HepG2 (cell line): ENCODE measurements at regions of chr9 and their contacts with region 1.

Region 1: DNA sequence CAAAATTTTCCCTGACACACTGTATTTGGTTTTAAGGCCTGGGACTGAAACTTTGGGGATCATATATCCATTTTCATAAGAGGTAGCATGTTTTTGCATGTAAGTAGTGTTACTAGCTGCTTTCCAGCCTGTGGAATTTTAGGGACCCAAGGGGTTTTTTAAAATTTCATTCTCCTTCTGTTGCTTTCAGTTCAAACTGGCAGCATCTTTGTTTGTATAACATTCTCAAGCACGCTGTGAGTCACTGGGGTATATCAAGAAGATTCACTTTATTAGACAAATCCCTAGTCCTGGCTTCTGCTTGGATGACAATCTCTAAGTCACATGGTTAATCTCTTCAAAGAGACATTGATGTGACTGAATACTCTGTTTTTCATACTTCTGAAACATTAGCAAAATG is 479.0 kb downstream of the CYLC2 start:
- DNase-seq: no peak
- ATAC-seq: no peak
- H3K4me3 ChIP-seq: no peak overlapping the region
- H3K27ac ChIP-seq: no peak overlapping the region
- H3K4me1 ChIP-seq: no peaks in the 10 kb centered on the region
- H3K27me3 ChIP-seq: no peaks in the 10 kb centered on the region
- CTCF ChIP-seq: no peak
- EP300 ChIP-seq: no peak
- POLR2A ChIP-seq: no peak
- RAD21 ChIP-seq: no peak

Region 2: DNA sequence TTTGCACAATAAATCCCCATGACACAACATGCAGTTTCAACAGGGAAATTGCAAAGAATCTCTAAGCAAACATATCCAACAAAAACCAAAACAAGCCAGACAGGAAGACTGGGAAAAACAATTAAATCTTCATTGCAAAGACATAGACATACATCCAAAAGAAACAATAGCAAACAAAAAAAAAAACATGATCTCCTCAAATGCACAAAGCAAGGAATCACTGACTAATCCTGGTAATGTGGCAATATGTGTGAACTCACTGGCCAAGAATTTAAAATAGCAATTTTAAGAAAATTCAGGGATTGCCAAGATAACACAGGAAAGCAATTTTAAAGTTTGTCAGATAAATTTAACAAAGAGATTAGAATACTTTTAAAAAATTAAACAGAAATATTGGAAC is 99.9 kb after region 1 on chr9:
- CTCF ChIA-PET with region 1: no interaction called
- POLR2A ChIA-PET with region 1: no interaction called
- in situ Hi-C with region 1: loop called (anchors 25 kb)
- intact Hi-C with region 1: no loop called
- DNase-seq: no peak
- ATAC-seq: no peak
- H3K4me3 ChIP-seq: no peak overlapping the region
- H3K27ac ChIP-seq: no peak overlapping the region
- H3K4me1 ChIP-seq: no peaks in the 10 kb centered on the region
- H3K27me3 ChIP-seq: no peaks in the 10 kb centered on the region
- CTCF ChIP-seq: no peak
- EP300 ChIP-seq: no peak
- POLR2A ChIP-seq: no peak
- RAD21 ChIP-seq: no peak